Panc1 (cell line): ENCODE measurements at regions of chr4 and their contacts with region 1.

Region 1: DNA sequence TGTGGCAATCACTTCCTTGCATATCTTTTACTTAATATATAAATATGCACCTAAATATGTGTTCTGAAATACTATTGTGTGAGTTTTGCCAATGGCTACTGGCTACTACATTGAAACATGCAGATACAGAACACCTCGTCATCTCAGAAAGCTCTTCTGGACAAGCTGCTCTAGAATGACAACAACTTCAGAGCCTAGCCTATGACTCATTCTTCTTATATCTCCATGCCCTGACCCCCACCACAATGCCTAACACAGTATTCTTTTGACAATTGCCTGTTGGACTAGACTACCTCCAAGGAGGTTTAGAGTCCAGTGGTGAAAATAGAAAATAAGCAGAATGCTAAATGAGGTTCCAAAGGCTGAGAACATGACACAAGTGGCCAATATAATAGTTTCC is 17.6 kb upstream of the DMP1 start:
- DNase-seq: no peak
- ATAC-seq: no peak
- H3K4me3 ChIP-seq: no peak overlapping the region
- H3K27ac ChIP-seq: no peak overlapping the region
- H3K4me1 ChIP-seq: no peaks in the 10 kb centered on the region
- H3K27me3 ChIP-seq: no peaks in the 10 kb centered on the region
- CTCF ChIP-seq: no peak

Region 2: GRCh38 chr4:87354168-87355102 is 278.0 kb before region 1 on chr4:
- CTCF ChIA-PET with region 1: no interaction called
- POLR2A ChIA-PET with region 1: no interaction called
- in situ Hi-C with region 1: no loop called
- intact Hi-C with region 1: no loop called
- DNase-seq: no peak
- ATAC-seq: no peak
- H3K4me3 ChIP-seq: no peak overlapping the region
- H3K27ac ChIP-seq: no peak overlapping the region
- H3K4me1 ChIP-seq: no peaks in the 10 kb centered on the region
- H3K27me3 ChIP-seq: no peaks in the 10 kb centered on the region
- CTCF ChIP-seq: no peak

Region 3: GRCh38 chr4:87506974-87507701 is 125.3 kb before region 1 on chr4:
- CTCF ChIA-PET with region 1: no interaction called
- POLR2A ChIA-PET with region 1: interaction called, 10 read pairs
- in situ Hi-C with region 1: no loop called
- intact Hi-C with region 1: no loop called
- DNase-seq: no peak
- ATAC-seq: no peak
- H3K4me3 ChIP-seq: no peak overlapping the region
- H3K27ac ChIP-seq: no peak overlapping the region
- H3K4me1 ChIP-seq: no peaks in the 10 kb centered on the region
- H3K27me3 ChIP-seq: no peaks in the 10 kb centered on the region
- CTCF ChIP-seq: no peak

Region 4: DNA sequence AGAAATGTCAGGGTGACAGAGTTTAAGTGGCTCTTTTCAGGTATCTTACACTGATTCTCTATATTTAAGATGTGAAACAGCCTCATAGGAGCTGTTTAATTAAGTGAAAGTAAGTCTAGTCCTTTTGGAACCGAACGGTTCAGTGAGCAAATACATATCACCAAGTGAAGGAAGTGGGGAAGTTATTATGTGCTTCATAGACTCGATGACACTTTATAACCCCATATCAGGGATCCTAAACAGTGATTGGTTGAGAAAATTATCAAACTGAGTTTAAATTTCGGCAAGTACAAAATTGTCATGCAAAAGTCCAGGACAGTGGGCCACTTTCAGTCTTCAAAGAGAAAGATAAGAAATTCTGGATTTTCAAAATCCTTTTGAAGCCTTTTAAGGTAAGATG is 24.2 kb before region 1 on chr4 and contains the start of gene DSPP:
- CTCF ChIA-PET with region 1: no interaction called
- POLR2A ChIA-PET with region 1: no interaction called
- in situ Hi-C with region 1: no loop called
- intact Hi-C with region 1: no loop called
- DNase-seq: no peak
- ATAC-seq: no peak
- H3K4me3 ChIP-seq: no peak within 1 kb of the TSS
- H3K27ac ChIP-seq: no peak within 1 kb of the TSS
- H3K4me1 ChIP-seq: no peaks in the 10 kb centered on the region
- H3K27me3 ChIP-seq: no peaks in the 10 kb centered on the region; the same call in 1 of the 2 replicates
- CTCF ChIP-seq: no peak
- total RNA-seq, gene DSPP: not detected

Region 5: GRCh38 chr4:87679449-87680169 is 47.1 kb after region 1 on chr4:
- CTCF ChIA-PET with region 1: no interaction called
- POLR2A ChIA-PET with region 1: no interaction called
- in situ Hi-C with region 1: no loop called
- intact Hi-C with region 1: no loop called
- DNase-seq: peak; percentile 10
- ATAC-seq: no peak
- H3K4me3 ChIP-seq: no peak overlapping the region
- H3K27ac ChIP-seq: no peak overlapping the region
- H3K4me1 ChIP-seq: no peaks in the 10 kb centered on the region
- H3K27me3 ChIP-seq: no peaks in the 10 kb centered on the region
- CTCF ChIP-seq: peak; percentile 83